K562 (cell line): ENCODE measurements at regions of chr20 and their contacts with region 1.

Region 1: GRCh38 chr20:59782986-59783640 is 150.3 kb downstream of the SYCP2 start:
- DNase-seq: peak; percentile 59 to 70 (median 66)
- ATAC-seq: peak; percentile 87
- H3K4me3 ChIP-seq: no peak overlapping the region
- H3K27ac ChIP-seq: no peak overlapping the region
- H3K4me1 ChIP-seq: no peaks in the 10 kb centered on the region
- H3K27me3 ChIP-seq: no peaks in the 10 kb centered on the region; a peak in 2 of 5 replicates
- CTCF ChIP-seq: peak; percentile 80 to 86 (median 82)
- EP300 ChIP-seq: no peak
- POLR2A ChIP-seq: no peak
- RAD21 ChIP-seq: peak in 1 of 2 experiments; percentile 66; a peak in 3 of 4 replicates

Region 2: GRCh38 chr20:59537991-59538390 is 245.1 kb before region 1 on chr20:
- CTCF ChIA-PET with region 1: no interaction called
- POLR2A ChIA-PET with region 1: no interaction called
- in situ Hi-C with region 1: no loop called
- intact Hi-C with region 1: no loop called
- DNase-seq: no peak
- ATAC-seq: no peak
- H3K4me3 ChIP-seq: no peak overlapping the region
- H3K27ac ChIP-seq: no peak overlapping the region
- H3K4me1 ChIP-seq: no peaks in the 10 kb centered on the region
- H3K27me3 ChIP-seq: no peaks in the 10 kb centered on the region
- CTCF ChIP-seq: no peak
- EP300 ChIP-seq: no peak
- POLR2A ChIP-seq: no peak
- RAD21 ChIP-seq: no peak

Region 3: DNA sequence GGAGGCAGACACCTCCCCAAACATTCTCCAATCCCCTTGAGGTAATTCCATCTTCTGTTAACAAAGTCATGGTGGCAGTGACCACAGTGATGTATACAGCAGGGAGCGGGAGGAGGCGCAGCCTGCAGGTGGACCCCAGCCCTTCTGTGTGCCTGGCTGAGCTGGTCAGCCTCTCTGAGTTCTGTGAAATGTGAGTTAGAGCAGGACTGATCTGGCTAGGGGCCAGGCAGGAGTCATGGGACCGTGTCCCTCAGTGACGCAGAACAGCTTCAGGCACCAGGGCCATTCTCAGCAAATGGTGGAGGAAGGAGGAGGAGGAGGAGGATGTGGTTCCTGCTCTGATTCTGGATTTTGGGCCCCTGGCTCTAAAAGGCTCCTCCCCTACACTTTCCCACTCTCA is 171.8 kb before region 1 on chr20:
- CTCF ChIA-PET with region 1: no interaction called
- POLR2A ChIA-PET with region 1: no interaction called
- in situ Hi-C with region 1: no loop called
- intact Hi-C with region 1: no loop called
- DNase-seq: no peak
- ATAC-seq: no peak
- H3K4me3 ChIP-seq: no peak overlapping the region
- H3K27ac ChIP-seq: no peak overlapping the region
- H3K4me1 ChIP-seq: no peaks in the 10 kb centered on the region
- H3K27me3 ChIP-seq: no peaks in the 10 kb centered on the region; a peak in 1 of 5 replicates
- CTCF ChIP-seq: no peak
- EP300 ChIP-seq: no peak
- POLR2A ChIP-seq: no peak
- RAD21 ChIP-seq: no peak

Region 4: DNA sequence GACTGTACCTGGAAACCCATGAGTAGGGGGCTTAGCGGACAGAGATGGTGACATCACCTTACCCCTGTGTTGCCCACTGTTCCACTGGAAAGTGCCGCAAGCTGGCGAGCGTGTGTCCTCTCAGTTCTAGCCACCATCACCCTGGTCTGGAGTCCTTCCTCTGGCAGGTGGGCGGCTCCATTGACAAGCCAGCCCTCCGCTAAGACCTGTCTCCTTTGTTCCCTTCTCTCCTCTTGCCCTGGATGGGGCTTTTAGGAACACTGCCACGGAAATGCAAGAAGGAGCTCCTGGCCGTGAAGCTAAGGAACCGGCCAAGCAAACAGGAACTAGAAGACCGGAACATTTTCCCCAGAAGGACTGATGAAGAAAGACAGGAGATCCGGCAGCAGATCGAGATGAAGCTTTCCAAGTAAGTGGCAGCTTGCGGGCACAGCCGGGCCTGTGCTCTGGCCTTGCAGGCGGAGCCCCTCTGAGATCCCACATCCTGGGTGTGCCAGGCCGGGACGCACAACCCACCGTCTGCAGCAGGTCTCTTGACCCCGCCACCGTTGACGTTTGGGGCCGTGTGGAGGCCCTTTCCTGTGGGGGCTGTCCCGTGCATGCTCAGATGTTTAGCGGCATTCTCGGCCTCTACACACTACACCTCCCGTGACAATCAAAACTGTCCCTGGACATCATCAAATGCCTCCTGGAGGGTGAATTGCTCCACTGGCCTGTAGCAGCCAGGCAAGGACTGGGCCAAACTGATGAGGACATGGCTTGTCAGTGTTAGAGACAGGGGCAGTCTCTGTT is 22.9 kb after region 1 on chr20:
- CTCF ChIA-PET with region 1: no interaction called
- POLR2A ChIA-PET with region 1: no interaction called
- in situ Hi-C with region 1: no loop called
- intact Hi-C with region 1: no loop called
- DNase-seq: no peak
- ATAC-seq: no peak
- H3K4me3 ChIP-seq: no peak overlapping the region
- H3K27ac ChIP-seq: no peak overlapping the region
- H3K4me1 ChIP-seq: no peaks in the 10 kb centered on the region
- H3K27me3 ChIP-seq: peaks cover 18 to 49% of the 10 kb centered on the region in 2 experiments; a peak in 3 of 5 replicates
- CTCF ChIP-seq: no peak
- EP300 ChIP-seq: no peak
- POLR2A ChIP-seq: no peak
- RAD21 ChIP-seq: no peak

Region 5: DNA sequence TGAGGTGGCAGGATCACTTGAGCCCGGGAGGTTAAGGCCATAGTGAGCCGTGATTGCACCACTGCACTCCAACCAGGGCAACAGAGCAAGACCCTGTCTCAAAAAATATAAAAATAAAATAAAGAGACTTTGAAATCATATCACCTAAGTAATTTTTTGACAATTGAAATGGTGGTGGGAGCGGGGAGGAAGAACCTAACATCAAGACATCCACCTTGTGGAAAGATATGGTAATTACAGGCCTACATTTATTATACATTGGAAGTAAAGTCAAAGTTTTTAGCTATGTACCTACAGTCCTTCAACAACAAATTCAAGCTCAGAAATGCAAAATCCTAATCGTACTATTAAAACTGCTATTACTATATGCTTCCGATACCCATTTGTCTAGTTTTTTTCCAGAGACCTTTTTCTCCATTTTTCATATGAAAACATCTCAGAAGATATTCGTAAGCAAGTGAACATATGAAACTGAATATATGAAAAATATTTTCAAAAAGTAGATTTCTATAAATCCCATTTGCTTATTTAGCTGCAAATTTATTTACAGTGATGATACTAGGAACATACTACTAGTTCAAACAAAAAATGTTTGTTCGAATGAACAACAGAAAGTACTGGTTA is 67.0 kb after region 1 on chr20:
- CTCF ChIA-PET with region 1: no interaction called
- POLR2A ChIA-PET with region 1: no interaction called
- in situ Hi-C with region 1: no loop called
- intact Hi-C with region 1: loop called (anchors 1 kb)
- DNase-seq: peak; percentile 30 to 38 (median 35)
- ATAC-seq: peak; percentile 72
- H3K4me3 ChIP-seq: no peak overlapping the region
- H3K27ac ChIP-seq: no peak overlapping the region
- H3K4me1 ChIP-seq: no peaks in the 10 kb centered on the region
- H3K27me3 ChIP-seq: no peaks in the 10 kb centered on the region
- CTCF ChIP-seq: peak; percentile 24 to 61 (median 46); a peak in 4 of 6 replicates
- EP300 ChIP-seq: no peak
- POLR2A ChIP-seq: no peak
- RAD21 ChIP-seq: peak; percentile 12 to 45; a peak in 2 of 4 replicates

Region 6: GRCh38 chr20:59955132-59955796 is 172.2 kb after region 1 on chr20:
- CTCF ChIA-PET with region 1: interaction called, 4 read pairs
- POLR2A ChIA-PET with region 1: no interaction called
- in situ Hi-C with region 1: no loop called
- intact Hi-C with region 1: loop called (anchors 2 kb)
- DNase-seq: peak; percentile 14 to 52 (median 28)
- ATAC-seq: peak; percentile 93
- H3K4me3 ChIP-seq: no peak overlapping the region
- H3K27ac ChIP-seq: no peak overlapping the region
- H3K4me1 ChIP-seq: no peaks in the 10 kb centered on the region
- H3K27me3 ChIP-seq: peaks cover 0 to 7% of the 10 kb centered on the region in 2 experiments; a peak in 1 of 5 replicates
- CTCF ChIP-seq: peak; percentile 50 to 68 (median 65); a peak in 5 of 6 replicates
- EP300 ChIP-seq: no peak
- POLR2A ChIP-seq: no peak
- RAD21 ChIP-seq: peak; percentile 34 to 67